Gastrocnemius medialis (tissue), 4 donors: ENCODE measurements at regions of chr10 and their contacts with region 1.

Region 1: GRCh38 chr10:94213001-94213530 is 149.7 kb downstream of the NOC3L start:
- DNase-seq: peak; percentile 82 to 87
- ATAC-seq: peak; percentile 94 to 95
- H3K4me3 ChIP-seq: no peak overlapping the region
- H3K27ac ChIP-seq: peak overlapping the region; percentile 87 to 93 (median 88)
- H3K4me1 ChIP-seq: peaks cover 41 to 47% of the 10 kb centered on the region in 2 donors
- H3K27me3 ChIP-seq: no peaks in the 10 kb centered on the region
- CTCF ChIP-seq: no peak
- POLR2A ChIP-seq: no peak

Region 2: GRCh38 chr10:93947055-93947454 is 266.0 kb before region 1 on chr10:
- in situ Hi-C with region 1: no loop called
- intact Hi-C with region 1: loop called (anchors 2 kb)
- DNase-seq: peak; percentile 86 to 88
- ATAC-seq: peak; percentile 99
- H3K4me3 ChIP-seq: peak overlapping the region in 1 of 4 donors; percentile 23
- H3K27ac ChIP-seq: peak overlapping the region; percentile 78 to 88 (median 82)
- H3K4me1 ChIP-seq: peaks cover 31 to 37% of the 10 kb centered on the region in 2 donors
- H3K27me3 ChIP-seq: no peaks in the 10 kb centered on the region
- CTCF ChIP-seq: no peak
- POLR2A ChIP-seq: no peak

Region 3: DNA sequence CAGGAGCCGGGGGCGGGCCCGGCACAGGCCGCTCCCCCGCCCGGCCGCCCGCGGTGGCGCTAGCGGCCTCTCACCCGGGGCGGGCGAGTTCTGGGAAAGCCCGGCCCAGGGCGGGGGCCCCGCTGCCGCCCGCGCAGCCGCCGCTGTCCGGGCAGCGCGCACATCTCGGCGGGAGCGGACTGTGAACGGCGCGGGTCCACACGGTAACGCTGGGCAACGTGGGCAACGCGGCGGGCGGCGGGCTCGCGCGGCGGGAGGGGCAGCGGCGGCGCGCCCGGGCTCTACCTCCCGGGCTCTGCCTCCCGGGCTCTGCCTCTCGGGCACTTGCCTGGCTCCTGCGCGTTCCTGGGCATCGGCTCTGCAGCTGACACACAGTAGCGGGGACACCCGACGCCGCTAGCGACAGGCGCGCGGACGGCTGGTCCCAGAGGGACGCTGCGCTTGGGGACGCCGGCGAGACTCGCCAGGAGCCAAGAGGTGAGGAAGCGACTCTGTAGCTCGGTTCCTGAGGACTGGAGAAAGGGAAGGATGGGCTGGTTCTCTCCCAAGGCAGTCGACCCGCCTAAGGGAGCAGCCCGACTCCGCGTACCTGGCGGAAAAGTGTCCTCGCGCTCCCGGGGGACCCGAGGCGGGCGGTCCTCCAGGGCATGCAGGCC is 219.2 kb before region 1 on chr10 and contains the start of gene PLCE1:
- in situ Hi-C with region 1: no loop called
- intact Hi-C with region 1: loop called (anchors 5 kb)
- DNase-seq: peak; percentile 24 to 68
- ATAC-seq: peak; percentile 80 to 89
- H3K4me3 ChIP-seq: peak within 1 kb of the TSS; percentile 50 to 58 (median 55)
- H3K27ac ChIP-seq: peak within 1 kb of the TSS; percentile 44 to 61 (median 56)
- H3K4me1 ChIP-seq: peaks cover 6 to 22% of the 10 kb centered on the region in 2 donors
- H3K27me3 ChIP-seq: no peaks in the 10 kb centered on the region
- CTCF ChIP-seq: peak in 1 of 5 experiments; percentile 22
- POLR2A ChIP-seq: peak; percentile 34 to 52
- total RNA-seq, gene PLCE1: 2.7 to 5.9 (median 3.8) TPM

Region 4: DNA sequence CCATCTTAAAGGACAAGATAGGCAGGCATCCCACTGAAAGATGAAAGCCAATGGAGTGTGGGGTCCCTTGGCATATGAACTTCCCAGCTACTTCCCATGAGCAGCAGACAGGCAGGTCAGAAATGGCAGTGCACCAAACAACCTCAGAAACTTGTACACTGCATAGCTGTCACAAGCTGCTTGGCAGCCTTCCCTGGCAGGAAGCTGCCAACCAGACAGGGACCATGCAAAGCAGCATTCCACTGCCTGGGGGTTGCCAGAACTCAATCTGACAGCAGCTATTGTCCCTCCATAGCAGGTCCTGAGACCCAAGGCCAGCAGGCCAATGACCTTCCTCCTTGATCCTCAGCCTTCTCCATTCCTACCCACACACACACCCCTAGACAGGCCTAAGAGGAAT is 79.8 kb before region 1 on chr10:
- in situ Hi-C with region 1: no loop called
- intact Hi-C with region 1: loop called (anchors 5 kb)
- DNase-seq: peak; percentile 70 to 80
- ATAC-seq: peak; percentile 95 to 97
- H3K4me3 ChIP-seq: no peak overlapping the region
- H3K27ac ChIP-seq: peak overlapping the region in 2 of 4 donors; percentile 24 to 45
- H3K4me1 ChIP-seq: peaks cover 24 to 29% of the 10 kb centered on the region in 2 donors
- H3K27me3 ChIP-seq: no peaks in the 10 kb centered on the region
- CTCF ChIP-seq: no peak
- POLR2A ChIP-seq: no peak

Region 5: DNA sequence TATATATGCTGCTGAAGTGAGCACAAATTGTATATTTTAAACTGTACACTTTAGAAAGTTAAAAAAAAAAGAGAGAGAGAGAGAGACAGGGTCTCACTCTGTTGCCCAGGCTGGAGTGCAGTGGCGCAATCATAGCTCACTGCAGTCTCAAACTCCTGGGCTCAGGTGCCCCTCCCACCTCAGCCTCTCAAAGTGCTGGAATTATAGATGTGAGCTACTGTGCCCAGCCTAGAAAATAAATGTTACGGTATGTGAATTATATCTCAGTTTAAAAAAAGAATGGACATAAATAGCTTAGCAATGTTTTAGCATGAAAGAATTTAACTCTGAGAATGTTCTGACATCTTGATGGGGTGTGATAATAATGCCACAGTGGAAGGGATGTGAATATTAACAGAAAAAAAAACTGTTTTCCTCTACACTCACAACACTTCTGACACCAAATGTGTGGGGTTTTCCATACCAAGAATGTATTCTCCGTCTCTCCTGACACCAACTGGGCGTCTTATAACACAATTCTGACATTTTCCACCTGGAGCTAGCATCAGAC is 57.3 kb before region 1 on chr10:
- in situ Hi-C with region 1: no loop called
- intact Hi-C with region 1: no loop called
- DNase-seq: no peak
- ATAC-seq: no peak
- H3K4me3 ChIP-seq: no peak overlapping the region
- H3K27ac ChIP-seq: no peak overlapping the region
- H3K4me1 ChIP-seq: peaks cover 0 to 3% of the 10 kb centered on the region in 2 donors
- H3K27me3 ChIP-seq: no peaks in the 10 kb centered on the region
- CTCF ChIP-seq: no peak
- POLR2A ChIP-seq: no peak

Region 6: GRCh38 chr10:94274142-94274787 is 61.2 kb after region 1 on chr10:
- in situ Hi-C with region 1: no loop called
- intact Hi-C with region 1: loop called (anchors 2 kb)
- DNase-seq: peak; percentile 53 to 61
- ATAC-seq: peak; percentile 84 to 92
- H3K4me3 ChIP-seq: no peak overlapping the region
- H3K27ac ChIP-seq: peak overlapping the region; percentile 54 to 79 (median 64)
- H3K4me1 ChIP-seq: peaks cover 21 to 26% of the 10 kb centered on the region in 2 donors
- H3K27me3 ChIP-seq: no peaks in the 10 kb centered on the region
- CTCF ChIP-seq: no peak
- POLR2A ChIP-seq: no peak

Region 7: GRCh38 chr10:94285337-94285736 is 72.3 kb after region 1 on chr10:
- in situ Hi-C with region 1: no loop called
- intact Hi-C with region 1: no loop called
- DNase-seq: no peak
- ATAC-seq: no peak
- H3K4me3 ChIP-seq: no peak overlapping the region
- H3K27ac ChIP-seq: no peak overlapping the region
- H3K4me1 ChIP-seq: no peaks in the 10 kb centered on the region
- H3K27me3 ChIP-seq: no peaks in the 10 kb centered on the region
- CTCF ChIP-seq: no peak
- POLR2A ChIP-seq: no peak